MCF 10A (cell line): ENCODE measurements at regions of chr1 and their contacts with region 1.

Region 1: GRCh38 chr1:17460245-17460644 is 20.8 kb upstream of the RCC2 start:
- DNase-seq: peak; percentile 95
- H3K4me3 Mint-ChIP-seq: peak overlapping the region; percentile 35
- H3K27ac Mint-ChIP-seq: peak overlapping the region; percentile 73
- H3K4me1 Mint-ChIP-seq: peaks cover 13% of the 10 kb centered on the region
- H3K27me3 Mint-ChIP-seq: no peaks in the 10 kb centered on the region
- CTCF ChIP-seq: no peak

Region 2: DNA sequence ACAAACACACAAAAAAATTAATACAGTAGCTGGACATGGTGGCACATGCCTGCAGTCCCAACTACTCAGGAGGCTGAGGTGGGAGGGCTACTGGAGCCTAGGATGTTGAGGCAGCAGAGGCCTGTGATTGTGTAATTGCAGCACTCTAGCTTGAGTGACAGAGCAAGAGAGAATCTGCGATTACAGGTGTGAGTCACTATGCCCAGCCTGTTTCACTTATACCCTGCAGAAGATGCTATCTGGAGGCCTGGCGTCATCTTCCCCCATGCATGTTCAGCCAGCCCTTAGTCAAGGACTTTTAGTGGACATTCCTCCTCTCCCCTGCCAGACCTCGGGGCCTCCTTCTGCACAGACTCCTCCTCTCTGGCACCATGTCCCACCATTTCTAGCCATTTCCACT is 15.5 kb after region 1 on chr1:
- CTCF ChIA-PET with region 1: interaction called, 4 read pairs
- POLR2A ChIA-PET with region 1: interaction called, 16 read pairs
- intact Hi-C with region 1: no loop called
- DNase-seq: peak; percentile 89
- H3K4me3 Mint-ChIP-seq: no peak overlapping the region
- H3K27ac Mint-ChIP-seq: no peak overlapping the region
- H3K4me1 Mint-ChIP-seq: peaks cover 7% of the 10 kb centered on the region
- H3K27me3 Mint-ChIP-seq: no peaks in the 10 kb centered on the region
- CTCF ChIP-seq: no peak

Region 3: GRCh38 chr1:17531682-17532487 is 71.6 kb after region 1 on chr1:
- CTCF ChIA-PET with region 1: no interaction called
- POLR2A ChIA-PET with region 1: no interaction called
- intact Hi-C with region 1: no loop called
- DNase-seq: no peak
- H3K4me3 Mint-ChIP-seq: no peak overlapping the region
- H3K27ac Mint-ChIP-seq: no peak overlapping the region
- H3K4me1 Mint-ChIP-seq: no peaks in the 10 kb centered on the region
- H3K27me3 Mint-ChIP-seq: no peaks in the 10 kb centered on the region
- CTCF ChIP-seq: no peak